AG04450 (cell line): ENCODE measurements at regions of chr5 and their contacts with region 1.

Region 1: GRCh38 chr5:122704243-122705036 is 70.4 kb upstream of the SNX2 start:
- DNase-seq: peak; percentile 18
- H3K4me3 ChIP-seq: no peak overlapping the region
- H3K27ac ChIP-seq: no peak overlapping the region
- H3K27me3 ChIP-seq: no peaks in the 10 kb centered on the region
- CTCF ChIP-seq: peak; percentile 74

Region 2: GRCh38 chr5:122715095-122715494 is 10.7 kb after region 1 on chr5:
- CTCF ChIA-PET with region 1: interaction called, 21 read pairs
- POLR2A ChIA-PET with region 1: no interaction called
- DNase-seq: no peak
- H3K4me3 ChIP-seq: no peak overlapping the region
- H3K27ac ChIP-seq: no peak overlapping the region
- H3K27me3 ChIP-seq: no peaks in the 10 kb centered on the region
- CTCF ChIP-seq: no peak

Region 3: GRCh38 chr5:122743261-122743660 is 38.8 kb after region 1 on chr5:
- CTCF ChIA-PET with region 1: interaction called, 10 read pairs
- POLR2A ChIA-PET with region 1: no interaction called
- DNase-seq: no peak
- H3K4me3 ChIP-seq: no peak overlapping the region
- H3K27ac ChIP-seq: no peak overlapping the region
- H3K27me3 ChIP-seq: no peaks in the 10 kb centered on the region
- CTCF ChIP-seq: no peak

Region 4: DNA sequence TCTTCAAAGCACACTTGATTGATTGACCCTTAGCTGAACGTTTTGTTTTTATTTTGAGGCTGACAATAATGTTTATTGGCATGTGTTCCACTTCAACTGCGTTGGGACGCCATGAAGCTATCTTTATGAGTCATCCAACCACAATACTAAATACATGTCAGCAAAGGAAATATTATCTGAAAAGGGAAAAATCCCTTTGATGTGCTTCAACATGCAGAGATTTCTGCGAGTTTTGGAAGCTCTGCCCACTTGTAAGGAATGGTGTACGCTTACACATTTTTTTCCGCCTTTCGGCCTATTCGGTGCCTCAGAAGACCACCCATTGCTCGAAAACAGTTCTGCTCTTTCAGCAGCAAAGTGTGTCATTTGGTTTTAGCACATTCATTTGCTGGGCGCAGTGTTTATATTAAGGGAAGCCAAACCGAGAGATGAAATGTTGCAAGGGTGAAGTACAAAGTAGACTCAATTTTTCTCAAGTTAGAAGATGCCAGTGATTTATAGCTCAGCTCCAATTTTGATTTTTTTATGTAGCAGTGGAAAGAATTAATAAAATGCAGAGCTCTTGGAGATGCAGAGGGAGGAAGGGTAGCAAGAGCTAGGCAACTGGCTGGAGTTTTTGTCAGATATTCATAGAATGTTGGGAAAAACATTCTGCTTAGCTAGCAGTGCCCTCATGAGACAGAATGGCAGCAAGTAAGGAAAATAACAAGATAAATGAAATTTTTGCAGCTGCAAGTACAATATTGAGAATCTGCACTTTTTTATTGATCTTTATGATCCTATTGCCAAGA is 453.5 kb after region 1 on chr5:
- CTCF ChIA-PET with region 1: interaction called, 14 read pairs
- POLR2A ChIA-PET with region 1: no interaction called
- DNase-seq: peak; percentile 58
- H3K4me3 ChIP-seq: peak overlapping the region; percentile 33; the same call in 1 of the 2 replicates
- H3K27ac ChIP-seq: no peak overlapping the region
- H3K27me3 ChIP-seq: peaks cover 6% of the 10 kb centered on the region
- CTCF ChIP-seq: peak; percentile 37